Activated CD8-positive, alpha-beta memory T cell treated with anti-CD3 and anti-CD28 coated beads, Interleukin-2, amount 10 ng/mL, durations not matched to agents 7 days and 5 days (primary cell): ENCODE measurements at regions of chr15 and their contacts with region 1.

Region 1: GRCh38 chr15:50675536-50676144 is 11.0 kb downstream of the TRPM7 start:
- DNase-seq: no peak
- ATAC-seq: no peak
- H3K4me3 Mint-ChIP-seq: no peak overlapping the region
- H3K27ac Mint-ChIP-seq: no peak overlapping the region
- H3K4me1 Mint-ChIP-seq: peaks cover 13% of the 10 kb centered on the region
- H3K27me3 Mint-ChIP-seq: no peaks in the 10 kb centered on the region

Region 2: GRCh38 chr15:50523851-50524251 is 151.8 kb before region 1 on chr15:
- CTCF ChIA-PET with region 1: no interaction called
- DNase-seq: no peak
- ATAC-seq: no peak
- H3K4me3 Mint-ChIP-seq: no peak overlapping the region
- H3K27ac Mint-ChIP-seq: no peak overlapping the region
- H3K4me1 Mint-ChIP-seq: no peaks in the 10 kb centered on the region
- H3K27me3 Mint-ChIP-seq: no peaks in the 10 kb centered on the region

Region 3: GRCh38 chr15:50641288-50641687 is 34.4 kb before region 1 on chr15:
- CTCF ChIA-PET with region 1: no interaction called
- DNase-seq: no peak
- ATAC-seq: no peak
- H3K4me3 Mint-ChIP-seq: no peak overlapping the region
- H3K27ac Mint-ChIP-seq: peak overlapping the region; percentile 35
- H3K4me1 Mint-ChIP-seq: peaks cover 3% of the 10 kb centered on the region
- H3K27me3 Mint-ChIP-seq: no peaks in the 10 kb centered on the region

Region 4: DNA sequence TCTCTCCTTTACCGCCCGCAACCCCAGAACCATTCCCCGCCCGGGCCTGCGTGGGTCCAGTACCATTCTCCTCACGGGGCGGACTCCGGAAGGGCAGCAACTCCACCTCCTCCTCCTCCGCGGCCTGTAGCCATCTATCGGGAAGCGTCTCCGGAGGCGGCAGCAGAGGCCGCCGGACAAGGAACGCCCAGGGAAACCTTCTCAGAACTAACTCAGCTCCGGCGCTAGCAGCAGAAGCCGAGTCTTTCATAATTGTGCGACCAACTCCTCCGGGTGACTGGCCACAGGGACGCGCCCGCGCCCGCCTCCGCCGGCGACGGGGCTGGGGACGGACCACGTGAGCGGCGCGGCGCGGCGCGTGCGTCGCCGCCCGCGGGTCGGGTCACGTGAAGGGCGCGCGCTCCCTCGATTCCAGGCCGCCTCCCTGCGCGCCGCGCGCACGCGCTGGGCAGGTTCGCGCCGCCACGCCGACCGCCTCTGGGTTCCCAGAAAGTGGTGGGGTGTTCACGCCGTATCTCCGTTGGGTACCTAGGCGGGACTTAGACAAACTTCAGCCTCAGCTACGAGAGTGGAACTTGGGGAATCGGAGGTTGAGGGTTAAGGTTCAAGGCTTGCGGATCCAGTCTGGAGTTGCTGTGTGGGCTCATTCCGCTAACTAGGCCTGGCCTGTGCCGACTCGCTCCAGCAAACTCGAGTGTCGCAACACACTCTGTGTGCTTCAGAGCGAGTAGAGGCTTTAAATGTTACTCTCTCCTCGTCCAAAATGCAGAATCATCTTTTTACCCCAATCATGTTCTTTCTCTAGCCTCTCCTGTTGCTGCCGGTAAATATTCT is 11.0 kb after region 1 on chr15 and contains the start of gene TRPM7:
- CTCF ChIA-PET with region 1: interaction called, 17 read pairs
- DNase-seq: peak; percentile 90
- ATAC-seq: peak; percentile 89
- H3K4me3 Mint-ChIP-seq: peak within 1 kb of the TSS; percentile 99
- H3K27ac Mint-ChIP-seq: peak within 1 kb of the TSS; percentile 95
- H3K4me1 Mint-ChIP-seq: peaks cover 50% of the 10 kb centered on the region
- H3K27me3 Mint-ChIP-seq: no peaks in the 10 kb centered on the region
- total RNA-seq, gene TRPM7: 44.5 to 45.8 TPM

Region 5: GRCh38 chr15:50765195-50765973 is 89.7 kb after region 1 on chr15 and contains the start of gene SPPL2A:
- CTCF ChIA-PET with region 1: no interaction called
- DNase-seq: peak; percentile 93
- ATAC-seq: peak; percentile 94
- H3K4me3 Mint-ChIP-seq: peak within 1 kb of the TSS; percentile 90
- H3K27ac Mint-ChIP-seq: peak within 1 kb of the TSS; percentile 96
- H3K4me1 Mint-ChIP-seq: peaks cover 51% of the 10 kb centered on the region
- H3K27me3 Mint-ChIP-seq: no peaks in the 10 kb centered on the region
- total RNA-seq, gene SPPL2A: 76.8 to 108 TPM

Region 6: GRCh38 chr15:50786871-50787270 is 111.2 kb after region 1 on chr15:
- CTCF ChIA-PET with region 1: no interaction called
- DNase-seq: no peak
- ATAC-seq: no peak
- H3K4me3 Mint-ChIP-seq: no peak overlapping the region
- H3K27ac Mint-ChIP-seq: no peak overlapping the region
- H3K4me1 Mint-ChIP-seq: no peaks in the 10 kb centered on the region
- H3K27me3 Mint-ChIP-seq: peaks cover 11% of the 10 kb centered on the region

Region 7: GRCh38 chr15:50876989-50877360 is 201.3 kb after region 1 on chr15:
- CTCF ChIA-PET with region 1: interaction called, 11 read pairs
- DNase-seq: peak; percentile 83
- ATAC-seq: peak; percentile 20
- H3K4me3 Mint-ChIP-seq: peak overlapping the region; percentile 67
- H3K27ac Mint-ChIP-seq: peak overlapping the region; percentile 84
- H3K4me1 Mint-ChIP-seq: peaks cover 54% of the 10 kb centered on the region
- H3K27me3 Mint-ChIP-seq: peaks cover 12% of the 10 kb centered on the region